Caco-2 (cell line): ENCODE measurements at regions of chr10 and their contacts with region 1.

Region 1: GRCh38 chr10:21510241-21511074 is 15.0 kb downstream of the SKIDA1 start:
- DNase-seq: peak; percentile 51 to 56
- H3K4me3 ChIP-seq: no peak overlapping the region
- H3K4me3 Mint-ChIP-seq: peak overlapping the region; percentile 43
- H3K27ac Mint-ChIP-seq: peak overlapping the region; percentile 64
- H3K4me1 ChIP-seq: peaks cover 50% of the 10 kb centered on the region
- H3K4me1 Mint-ChIP-seq: peaks cover 71% of the 10 kb centered on the region
- H3K27me3 ChIP-seq: no peaks in the 10 kb centered on the region
- H3K27me3 Mint-ChIP-seq: no peaks in the 10 kb centered on the region
- CTCF ChIP-seq: no peak

Region 2: DNA sequence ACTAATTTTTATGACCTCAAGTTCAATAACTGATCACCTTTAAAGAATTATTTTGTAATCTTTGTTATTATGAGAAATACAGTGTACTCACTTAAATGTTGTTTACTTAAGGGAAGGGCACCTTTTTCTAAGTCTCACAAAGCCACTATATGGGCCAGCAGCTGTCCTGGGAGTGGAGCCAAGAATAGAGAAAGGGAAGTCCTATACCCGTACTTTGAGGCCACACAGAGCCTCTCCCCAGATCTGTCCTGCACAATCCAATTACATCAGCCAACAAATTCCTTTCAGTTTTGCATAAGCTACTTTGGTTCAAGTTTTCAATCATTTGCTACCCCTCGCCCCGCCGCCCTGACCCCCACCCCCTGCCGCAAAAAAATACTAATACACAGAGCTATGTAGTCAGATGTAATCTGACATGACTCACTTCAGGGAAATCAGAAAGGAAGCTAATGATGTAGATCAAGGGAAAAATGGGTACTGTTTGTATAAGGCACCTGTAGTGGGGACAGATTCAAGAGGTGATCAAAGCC is 315.9 kb before region 1 on chr10:
- CTCF ChIA-PET with region 1: no interaction called
- POLR2A ChIA-PET with region 1: no interaction called
- intact Hi-C with region 1: no loop called
- DNase-seq: no peak
- H3K4me3 ChIP-seq: no peak overlapping the region
- H3K4me3 Mint-ChIP-seq: peak overlapping the region; percentile 27
- H3K27ac Mint-ChIP-seq: peak overlapping the region; percentile 74
- H3K4me1 ChIP-seq: peaks cover 19% of the 10 kb centered on the region
- H3K4me1 Mint-ChIP-seq: peaks cover 28% of the 10 kb centered on the region
- H3K27me3 ChIP-seq: no peaks in the 10 kb centered on the region
- H3K27me3 Mint-ChIP-seq: no peaks in the 10 kb centered on the region
- CTCF ChIP-seq: no peak

Region 3: DNA sequence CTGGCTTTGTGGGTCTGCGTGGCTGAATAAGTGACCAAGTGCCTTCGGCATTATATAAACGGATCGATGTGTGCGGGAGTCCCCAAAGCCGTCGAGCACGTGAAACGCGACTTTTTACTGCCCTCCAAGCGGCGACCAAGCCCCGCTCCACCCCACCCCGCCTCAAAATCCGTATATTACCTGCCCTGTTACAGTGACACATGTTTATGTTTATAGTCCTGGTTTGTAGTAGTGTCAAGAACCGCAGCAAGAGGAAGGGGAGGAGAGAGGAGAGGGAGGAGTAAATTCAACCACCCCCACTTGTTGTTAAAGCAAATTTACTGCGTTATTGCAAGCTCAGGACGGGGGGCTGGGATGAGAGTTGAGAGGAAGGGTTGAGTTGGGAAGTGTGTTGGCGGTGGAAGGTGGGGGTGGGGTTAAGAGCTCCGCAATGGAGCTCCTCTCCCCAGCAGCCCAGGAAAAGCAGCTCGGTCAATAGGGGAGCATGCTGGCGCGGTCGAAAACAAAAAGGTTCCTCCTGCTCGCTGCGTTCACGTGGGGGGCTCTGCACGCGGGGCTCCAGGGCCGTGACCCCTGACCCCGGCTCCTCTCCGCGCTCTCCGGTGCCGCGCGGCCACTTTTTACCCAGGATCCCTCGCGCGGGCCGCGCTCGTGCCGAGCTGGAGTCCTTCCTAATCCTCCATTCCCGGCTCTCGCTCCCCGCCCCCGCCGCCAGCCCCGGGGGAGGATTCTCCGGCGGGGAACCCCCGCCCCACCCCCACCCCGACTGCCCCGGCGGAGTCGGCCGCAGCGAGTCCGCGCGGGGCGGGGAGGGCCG is 15.1 kb after region 1 on chr10 and contains the start of gene SKIDA1:
- CTCF ChIA-PET with region 1: interaction called, 6 read pairs
- POLR2A ChIA-PET with region 1: interaction called, 22 read pairs
- intact Hi-C with region 1: no loop called
- DNase-seq: peak; percentile 96 to 97
- H3K4me3 ChIP-seq: peak within 1 kb of the TSS; percentile 70
- H3K4me3 Mint-ChIP-seq: peak within 1 kb of the TSS; percentile 88
- H3K27ac Mint-ChIP-seq: peak within 1 kb of the TSS; percentile 98
- H3K4me1 ChIP-seq: peaks cover 30% of the 10 kb centered on the region
- H3K4me1 Mint-ChIP-seq: peaks cover 31% of the 10 kb centered on the region
- H3K27me3 ChIP-seq: no peaks in the 10 kb centered on the region
- H3K27me3 Mint-ChIP-seq: no peaks in the 10 kb centered on the region
- CTCF ChIP-seq: no peak
- total RNA-seq, gene SKIDA1: 5.7 and 6.3 TPM in 2 replicates